GM10248 (cell line): ENCODE measurements at regions of chr15 and their contacts with region 1.

Region 1: GRCh38 chr15:67601073-67601472 is 58.6 kb downstream of the MAP2K5 start:
- DNase-seq: no peak
- CTCF ChIP-seq: no peak

Region 2: GRCh38 chr15:67587754-67588153 is 13.3 kb before region 1 on chr15:
- CTCF ChIA-PET with region 1: interaction called, 11 read pairs
- POLR2A ChIA-PET with region 1: no interaction called
- DNase-seq: no peak
- CTCF ChIP-seq: no peak